CD4-positive, alpha-beta memory T cell (primary cell): ENCODE measurements at regions of chr14 and their contacts with region 1.

Region 1: DNA sequence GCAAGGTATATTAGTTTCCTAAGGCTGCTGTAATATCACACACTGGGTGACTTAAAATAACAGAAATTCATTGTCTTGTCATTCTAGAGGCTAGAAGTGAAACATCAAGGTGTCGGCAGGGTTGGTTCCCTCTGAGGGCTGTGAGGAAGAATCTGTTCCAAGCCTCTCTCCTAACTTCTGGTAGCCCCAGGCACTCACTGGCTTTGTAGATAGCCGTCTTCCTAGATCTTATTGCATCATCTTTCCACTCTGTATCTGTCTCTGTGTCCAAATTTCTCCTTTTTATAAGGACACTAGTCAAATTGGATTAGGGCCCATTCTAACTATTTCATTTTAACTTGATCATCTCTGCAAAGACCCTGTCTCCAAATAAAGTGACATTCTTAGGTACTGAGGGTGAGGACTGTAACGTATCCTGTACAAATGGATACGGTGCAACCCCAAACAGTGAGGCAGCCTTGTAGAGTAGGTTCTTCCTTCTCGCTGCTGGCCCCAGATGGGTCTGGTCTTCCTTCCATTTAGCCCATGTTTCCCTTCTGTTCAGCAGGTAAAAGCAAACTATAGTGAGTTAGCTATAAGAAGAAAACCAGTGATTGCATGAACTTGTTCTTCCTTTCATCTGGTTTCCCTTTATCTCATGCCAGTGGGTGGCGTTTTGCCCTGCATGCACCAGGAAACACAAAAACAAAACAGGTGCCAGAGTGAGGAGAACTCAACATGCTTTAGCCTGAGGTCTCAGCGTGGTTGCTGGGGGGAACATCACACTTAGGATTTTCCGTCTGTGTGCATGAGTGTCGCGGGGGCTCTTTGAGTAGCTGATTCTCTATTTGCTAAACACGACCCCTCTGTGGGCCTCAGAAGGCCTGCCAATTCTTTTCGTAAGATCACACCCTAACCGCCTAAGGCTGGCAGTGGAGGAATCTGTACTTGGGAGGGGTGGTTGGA is 19.5 kb downstream of the TTC9 start:
- DNase-seq: peak; percentile 55 to 72 (median 60)
- H3K4me3 ChIP-seq: no peak overlapping the region
- H3K4me3 Mint-ChIP-seq: peak overlapping the region; percentile 26 to 80 (median 68)
- H3K27ac ChIP-seq: peak overlapping the region; percentile 49
- H3K27ac Mint-ChIP-seq: peak overlapping the region; percentile 88 to 98 (median 93)
- H3K4me1 ChIP-seq: peaks cover 79% of the 10 kb centered on the region
- H3K4me1 Mint-ChIP-seq: peaks cover 67 to 94% (median 79%) of the 10 kb centered on the region in 4 donors
- H3K27me3 ChIP-seq: no peaks in the 10 kb centered on the region
- H3K27me3 Mint-ChIP-seq: no peaks in the 10 kb centered on the region

Region 2: DNA sequence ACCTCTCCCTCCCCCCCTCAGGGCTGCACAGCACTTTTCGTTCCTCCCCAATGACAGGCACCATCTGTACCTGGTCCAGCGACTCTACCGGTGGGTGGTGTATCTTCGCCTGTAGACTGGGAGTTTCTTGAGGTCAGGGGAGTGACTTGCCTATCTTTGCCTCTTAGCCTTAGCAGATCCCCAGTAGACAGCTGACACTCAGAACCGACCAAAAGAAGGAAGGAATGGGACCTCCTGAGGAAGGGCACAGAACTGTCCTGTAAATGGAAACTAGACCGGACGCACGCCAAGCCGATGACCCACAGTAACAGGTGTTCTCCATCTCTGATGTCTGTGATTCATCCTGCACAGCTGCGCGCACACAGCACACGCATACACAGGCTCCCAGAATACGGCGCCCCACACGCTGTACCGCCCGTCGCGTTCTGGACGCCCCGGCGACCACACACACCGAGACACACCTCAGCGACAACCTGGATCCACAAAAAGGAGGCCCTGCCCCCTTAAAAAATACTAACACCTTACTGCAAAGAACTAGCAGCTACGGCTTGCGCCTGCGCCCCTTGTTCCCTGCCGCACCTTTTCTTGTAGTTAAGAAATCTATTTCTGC is 20.2 kb before region 1 on chr14:
- CTCF ChIA-PET with region 1: interaction called, 155 read pairs
- POLR2A ChIA-PET with region 1: interaction called, 363 read pairs
- intact Hi-C with region 1: loop called (anchors 1 kb)
- DNase-seq: peak; percentile 52 to 78 (median 59)
- H3K4me3 ChIP-seq: peak overlapping the region; percentile 78 to 85
- H3K4me3 Mint-ChIP-seq: peak overlapping the region; percentile 95 to 100 (median 97)
- H3K27ac ChIP-seq: peak overlapping the region; percentile 56
- H3K27ac Mint-ChIP-seq: peak overlapping the region; percentile 88 to 98 (median 95)
- H3K4me1 ChIP-seq: peaks cover 48% of the 10 kb centered on the region
- H3K4me1 Mint-ChIP-seq: peaks cover 35 to 64% (median 47%) of the 10 kb centered on the region in 4 donors
- H3K27me3 ChIP-seq: no peaks in the 10 kb centered on the region
- H3K27me3 Mint-ChIP-seq: peaks cover 0 to 1% of the 10 kb centered on the region in 2 donors

Region 3: GRCh38 chr14:70648346-70648745 is 12.9 kb before region 1 on chr14:
- CTCF ChIA-PET with region 1: interaction called, 155 read pairs
- POLR2A ChIA-PET with region 1: interaction called, 363 read pairs
- intact Hi-C with region 1: no loop called
- DNase-seq: no peak
- H3K4me3 ChIP-seq: no peak overlapping the region
- H3K4me3 Mint-ChIP-seq: peak overlapping the region in 4 of 8 donors; percentile 24 to 67 (median 52)
- H3K27ac ChIP-seq: no peak overlapping the region
- H3K27ac Mint-ChIP-seq: peak overlapping the region in 5 of 7 donors; percentile 2 to 62 (median 42)
- H3K4me1 ChIP-seq: peaks cover 88% of the 10 kb centered on the region
- H3K4me1 Mint-ChIP-seq: peaks cover 57 to 96% (median 83%) of the 10 kb centered on the region in 4 donors
- H3K27me3 ChIP-seq: no peaks in the 10 kb centered on the region
- H3K27me3 Mint-ChIP-seq: no peaks in the 10 kb centered on the region

Region 4: DNA sequence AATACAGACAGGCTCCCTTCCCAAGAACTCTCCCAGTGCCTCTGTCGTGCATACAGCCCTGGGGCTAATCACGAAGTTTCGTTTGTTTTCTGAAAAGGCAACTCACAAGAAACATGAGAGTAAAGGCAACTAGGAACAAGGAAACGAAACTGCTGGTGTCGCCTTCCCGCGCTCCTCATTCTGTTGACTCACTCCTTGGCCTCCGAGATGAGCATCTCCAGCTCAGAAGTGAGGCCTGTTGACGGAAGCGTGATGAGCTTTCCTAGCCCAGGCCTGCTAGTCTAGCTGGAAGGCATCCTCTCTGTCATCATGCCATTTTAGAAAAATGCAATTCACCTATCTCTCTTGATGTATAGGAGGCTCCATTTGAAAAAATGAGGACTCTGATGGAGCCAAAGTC is 31.0 kb after region 1 on chr14:
- CTCF ChIA-PET with region 1: interaction called, 13 read pairs
- POLR2A ChIA-PET with region 1: no interaction called
- intact Hi-C with region 1: no loop called
- DNase-seq: no peak
- H3K4me3 ChIP-seq: no peak overlapping the region
- H3K4me3 Mint-ChIP-seq: no peak overlapping the region
- H3K27ac ChIP-seq: no peak overlapping the region
- H3K27ac Mint-ChIP-seq: no peak overlapping the region
- H3K4me1 ChIP-seq: no peaks in the 10 kb centered on the region
- H3K4me1 Mint-ChIP-seq: no peaks in the 10 kb centered on the region
- H3K27me3 ChIP-seq: no peaks in the 10 kb centered on the region
- H3K27me3 Mint-ChIP-seq: no peaks in the 10 kb centered on the region